Heart right ventricle (tissue), 16 donors: ENCODE measurements at regions of chr12 and their contacts with region 1.

Region 1: GRCh38 chr12:20463913-20464524 is 95.7 kb downstream of the PDE3A start:
- DNase-seq: no peak
- ATAC-seq: no peak
- H3K4me3 ChIP-seq: no peak overlapping the region
- H3K27ac ChIP-seq: peak overlapping the region in 2 of 10 donors; percentile 42 to 67
- H3K4me1 ChIP-seq: peaks cover 0 to 72% (median 46%) of the 10 kb centered on the region in 9 donors
- H3K27me3 ChIP-seq: no peaks in the 10 kb centered on the region
- CTCF ChIP-seq: peak; percentile 11 to 71 (median 58)

Region 2: DNA sequence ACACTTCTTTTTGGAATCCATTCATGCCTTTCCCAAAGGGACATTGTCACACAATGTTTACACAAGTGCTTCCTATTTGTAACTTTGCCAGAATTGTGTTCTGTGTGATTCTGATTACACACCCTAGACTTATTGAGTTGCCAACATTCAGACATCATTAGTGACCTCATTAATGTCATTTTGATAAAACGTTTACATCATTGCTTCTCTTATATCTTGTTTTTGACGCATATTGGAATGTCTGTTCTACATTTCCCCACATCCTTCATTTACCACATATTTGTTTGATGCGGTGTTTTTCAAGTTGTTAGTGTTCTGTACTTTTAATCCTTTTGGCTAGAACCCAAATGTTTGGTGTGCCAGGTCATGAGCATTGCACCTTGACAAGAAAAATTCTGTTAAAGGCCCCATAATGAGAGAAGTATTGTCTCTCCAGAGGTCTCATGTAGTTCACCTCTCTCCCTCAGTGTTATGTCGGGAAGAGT is 719.2 kb before region 1 on chr12:
- intact Hi-C with region 1: loop called in 1 of 10 experiments (anchors 10 kb)
- DNase-seq: peak in 1 of 2 donors; percentile 43
- ATAC-seq: peak; percentile 73 to 93 (median 88)
- H3K4me3 ChIP-seq: no peak overlapping the region
- H3K27ac ChIP-seq: peak overlapping the region in 7 of 10 donors; percentile 31 to 61 (median 50)
- H3K4me1 ChIP-seq: peaks cover 0 to 38% (median 18%) of the 10 kb centered on the region in 9 donors
- H3K27me3 ChIP-seq: no peaks in the 10 kb centered on the region
- CTCF ChIP-seq: no peak

Region 3: GRCh38 chr12:20601668-20602280 is 137.8 kb after region 1 on chr12:
- intact Hi-C with region 1: loop called in 3 of 10 experiments (anchors 5 to 10 kb)
- DNase-seq: no peak
- ATAC-seq: peak in 2 of 8 donors; percentile 32 to 52
- H3K4me3 ChIP-seq: no peak overlapping the region
- H3K27ac ChIP-seq: peak overlapping the region in 8 of 10 donors; percentile 39 to 73 (median 57)
- H3K4me1 ChIP-seq: peaks cover 0 to 59% (median 12%) of the 10 kb centered on the region in 9 donors
- H3K27me3 ChIP-seq: no peaks in the 10 kb centered on the region
- CTCF ChIP-seq: peak in 8 of 9 donors; percentile 13 to 64 (median 52)